Left ventricle myocardium superior (tissue), 1 donor: ENCODE measurements at regions of chr2 and their contacts with region 1.

Region 1: GRCh38 chr2:1742681-1743395 is 1.5 kb downstream of the PXDN start:
- DNase-seq: peak; percentile 84
- ATAC-seq: peak; percentile 68

Region 2: GRCh38 chr2:1591978-1592907 is 150.6 kb before region 1 on chr2:
- intact Hi-C with region 1: loop called (anchors 10 kb)
- DNase-seq: peak; percentile 83
- ATAC-seq: peak; percentile 83